CD4-positive, alpha-beta T cell (primary cell): ENCODE measurements at regions of chr9 and their contacts with region 1.

Region 1: DNA sequence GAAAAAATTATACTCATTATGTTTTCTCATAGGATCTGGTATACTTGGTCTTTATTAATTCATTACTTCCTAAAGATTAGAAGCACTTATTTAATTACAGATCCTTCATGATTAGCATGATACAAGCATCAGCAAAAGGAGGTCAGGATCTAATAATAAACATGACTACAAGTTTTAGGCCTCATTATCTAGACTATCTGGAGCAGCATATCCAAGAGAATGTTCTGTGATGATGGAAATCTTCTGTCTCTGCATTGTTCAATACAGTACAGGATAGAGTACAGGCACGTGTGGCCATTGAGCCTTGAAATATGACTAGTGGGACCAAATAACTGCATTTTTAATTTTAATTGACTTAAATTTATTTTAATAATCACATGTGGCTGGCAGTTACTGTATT is 21.2 kb downstream of the SETX start:
- DNase-seq: no peak
- ATAC-seq: no peak
- H3K4me3 ChIP-seq: no peak overlapping the region
- H3K4me3 Mint-ChIP-seq: no peak overlapping the region
- H3K27ac ChIP-seq: no peak overlapping the region
- H3K27ac Mint-ChIP-seq: no peak overlapping the region
- H3K4me1 ChIP-seq: no peaks in the 10 kb centered on the region
- H3K4me1 Mint-ChIP-seq: peaks cover 32% of the 10 kb centered on the region
- H3K27me3 ChIP-seq: no peaks in the 10 kb centered on the region
- H3K27me3 Mint-ChIP-seq: no peaks in the 10 kb centered on the region
- CTCF ChIP-seq: no peak

Region 2: DNA sequence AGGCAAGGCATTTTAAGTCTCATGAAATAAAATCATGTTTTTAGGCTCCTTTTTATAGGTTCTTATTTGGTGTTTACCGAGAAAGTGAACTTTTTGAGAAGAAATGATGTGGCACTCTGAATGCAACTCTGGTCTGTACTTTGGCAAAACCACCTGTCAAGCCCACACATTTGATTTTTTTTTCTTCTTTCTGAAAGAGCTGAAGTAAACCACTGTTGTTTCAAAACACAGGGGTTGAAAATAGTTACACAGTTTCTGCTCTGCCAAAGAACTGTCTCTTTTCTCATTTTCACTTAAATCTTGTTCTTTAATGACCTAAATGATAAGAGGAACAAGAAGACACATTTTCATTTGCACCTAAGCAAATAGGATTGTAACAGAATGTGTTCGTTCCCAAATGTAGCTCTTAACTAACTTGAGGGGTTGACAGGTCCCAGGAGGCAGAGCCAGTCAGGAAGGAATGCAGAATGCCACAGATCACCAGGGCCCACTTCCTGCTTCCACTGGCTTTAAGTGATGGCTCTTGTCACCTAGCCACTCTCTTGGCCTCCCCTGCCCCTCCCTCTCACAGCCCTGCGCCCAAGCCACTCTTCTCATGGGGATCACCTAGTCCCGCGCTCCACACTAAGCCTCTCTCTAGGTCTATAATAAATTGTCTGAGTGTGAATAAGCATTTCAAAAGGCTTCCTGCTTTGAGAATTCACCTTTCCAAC is 301.2 kb before region 1 on chr9:
- CTCF ChIA-PET with region 1: no interaction called
- POLR2A ChIA-PET with region 1: no interaction called
- intact Hi-C with region 1: no loop called
- DNase-seq: no peak
- ATAC-seq: no peak
- H3K4me3 ChIP-seq: no peak overlapping the region
- H3K4me3 Mint-ChIP-seq: no peak overlapping the region
- H3K27ac ChIP-seq: no peak overlapping the region
- H3K27ac Mint-ChIP-seq: no peak overlapping the region
- H3K4me1 ChIP-seq: peaks cover 5% of the 10 kb centered on the region
- H3K4me1 Mint-ChIP-seq: peaks cover 59% of the 10 kb centered on the region
- H3K27me3 ChIP-seq: no peaks in the 10 kb centered on the region
- H3K27me3 Mint-ChIP-seq: no peaks in the 10 kb centered on the region
- CTCF ChIP-seq: no peak

Region 3: GRCh38 chr9:132288361-132288760 is 45.2 kb before region 1 on chr9:
- CTCF ChIA-PET with region 1: interaction called, 3 read pairs
- POLR2A ChIA-PET with region 1: no interaction called
- intact Hi-C with region 1: loop called in 1 of 2 experiments (anchors 10 kb)
- DNase-seq: no peak
- ATAC-seq: no peak
- H3K4me3 ChIP-seq: no peak overlapping the region
- H3K4me3 Mint-ChIP-seq: no peak overlapping the region
- H3K27ac ChIP-seq: no peak overlapping the region
- H3K27ac Mint-ChIP-seq: peak overlapping the region; percentile 42
- H3K4me1 ChIP-seq: peaks cover 4% of the 10 kb centered on the region
- H3K4me1 Mint-ChIP-seq: peaks cover 7% of the 10 kb centered on the region
- H3K27me3 ChIP-seq: no peaks in the 10 kb centered on the region
- H3K27me3 Mint-ChIP-seq: no peaks in the 10 kb centered on the region
- CTCF ChIP-seq: no peak

Region 4: GRCh38 chr9:132312873-132313272 is 20.7 kb before region 1 on chr9:
- CTCF ChIA-PET with region 1: no interaction called
- POLR2A ChIA-PET with region 1: interaction called, 3 read pairs
- intact Hi-C with region 1: loop called in 1 of 2 experiments (anchors 2 kb)
- DNase-seq: no peak
- ATAC-seq: no peak
- H3K4me3 ChIP-seq: no peak overlapping the region
- H3K4me3 Mint-ChIP-seq: no peak overlapping the region
- H3K27ac ChIP-seq: no peak overlapping the region
- H3K27ac Mint-ChIP-seq: peak overlapping the region; percentile 16
- H3K4me1 ChIP-seq: peaks cover 3% of the 10 kb centered on the region
- H3K4me1 Mint-ChIP-seq: peaks cover 35% of the 10 kb centered on the region
- H3K27me3 ChIP-seq: no peaks in the 10 kb centered on the region
- H3K27me3 Mint-ChIP-seq: no peaks in the 10 kb centered on the region
- CTCF ChIP-seq: no peak

Region 5: DNA sequence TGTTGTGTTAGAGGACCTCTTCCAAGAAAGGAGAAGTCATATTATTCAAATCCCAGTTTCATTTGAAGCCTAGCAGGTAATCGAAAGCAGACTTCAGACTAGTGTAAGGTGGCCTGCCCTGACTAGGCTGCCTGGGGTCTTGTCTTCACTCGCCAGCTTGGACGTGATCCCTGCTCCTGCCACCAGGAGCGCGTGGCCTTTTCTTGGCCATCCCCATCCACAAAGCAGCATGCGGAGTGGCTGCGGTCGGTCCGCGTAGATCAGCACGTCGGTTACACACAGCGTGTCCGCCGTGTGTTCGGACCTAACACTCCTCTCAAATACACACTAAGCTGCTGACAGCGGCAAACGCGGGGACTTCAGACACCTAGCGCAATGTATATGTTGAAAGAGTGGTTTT is 113.8 kb after region 1 on chr9:
- CTCF ChIA-PET with region 1: no interaction called
- POLR2A ChIA-PET with region 1: no interaction called
- intact Hi-C with region 1: no loop called
- DNase-seq: no peak
- ATAC-seq: no peak
- H3K4me3 ChIP-seq: no peak overlapping the region
- H3K4me3 Mint-ChIP-seq: no peak overlapping the region
- H3K27ac ChIP-seq: no peak overlapping the region
- H3K27ac Mint-ChIP-seq: no peak overlapping the region
- H3K4me1 ChIP-seq: no peaks in the 10 kb centered on the region
- H3K4me1 Mint-ChIP-seq: no peaks in the 10 kb centered on the region
- H3K27me3 ChIP-seq: peaks cover 8 to 10% of the 10 kb centered on the region in 2 experiments
- H3K27me3 Mint-ChIP-seq: peaks cover 70% of the 10 kb centered on the region
- CTCF ChIP-seq: no peak